ENCODE measurements at regions of chr16 and their contacts with region 1.

Region 1: DNA sequence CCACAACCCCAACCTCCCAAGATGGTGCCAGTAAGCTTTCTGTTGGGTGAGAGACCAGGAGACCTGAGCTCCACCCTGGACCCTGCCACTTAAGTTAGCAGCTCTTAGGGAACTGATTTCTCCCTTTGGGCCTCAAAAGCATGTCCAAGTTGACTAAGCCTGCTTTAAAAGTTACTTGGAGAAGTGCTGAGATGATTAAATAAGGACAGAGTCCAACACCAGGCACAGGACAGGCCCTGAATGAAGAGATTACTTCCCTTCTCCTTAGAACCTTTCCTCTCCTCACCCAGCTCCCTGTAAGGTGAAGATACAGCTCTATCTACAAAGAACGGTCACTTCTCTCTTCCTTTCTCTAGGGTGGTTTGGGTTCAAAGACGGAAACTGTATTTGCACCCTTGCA is 162.6 kb downstream of the XYLT1 start:
- DNase-seq: no peak
- ATAC-seq: no peak
- H3K4me3 ChIP-seq: no peak overlapping the region
- H3K27ac ChIP-seq: no peak overlapping the region
- H3K4me1 ChIP-seq: no peaks in the 10 kb centered on the region
- H3K27me3 ChIP-seq: peaks cover 9% of the 10 kb centered on the region
- CTCF ChIP-seq: no peak

Region 2: DNA sequence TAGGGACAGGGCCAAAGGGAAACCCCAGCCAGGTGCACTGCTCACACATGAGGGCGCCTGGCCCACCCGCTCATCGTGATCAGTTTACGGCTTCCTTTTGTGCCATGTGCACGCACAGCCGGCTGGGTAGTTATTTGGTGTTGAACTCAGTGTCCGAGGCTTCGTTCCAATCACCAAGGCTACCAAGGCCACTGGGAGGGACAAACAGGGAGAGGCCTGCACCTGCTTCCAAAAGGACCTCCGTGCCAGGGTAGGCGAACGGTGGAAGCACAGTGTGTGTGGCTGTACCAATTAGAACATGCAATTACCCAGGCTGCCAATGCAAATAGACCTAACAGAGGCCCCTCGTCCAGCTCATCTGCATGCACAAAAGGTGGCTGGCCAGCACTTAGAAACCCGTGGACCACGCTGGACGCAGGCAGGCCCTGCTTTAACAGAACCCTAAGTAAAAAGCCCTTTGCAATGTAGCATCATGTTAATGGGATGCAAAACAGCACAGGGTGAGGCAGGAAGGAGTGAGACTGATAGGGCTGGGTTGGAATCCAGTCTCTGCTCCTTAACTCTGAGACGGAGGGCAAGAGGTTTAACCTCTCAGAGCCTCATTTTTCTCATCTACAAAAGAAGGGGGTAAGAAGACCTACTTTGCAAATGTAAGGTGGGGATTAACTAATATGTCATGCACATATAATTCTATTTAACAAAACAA is 41.4 kb before region 1 on chr16:
- CTCF ChIA-PET with region 1: no interaction called
- POLR2A ChIA-PET with region 1: no interaction called
- in situ Hi-C with region 1: no loop called
- intact Hi-C with region 1: loop called (anchors 2 kb)
- DNase-seq: no peak
- ATAC-seq: no peak
- H3K4me3 ChIP-seq: no peak overlapping the region
- H3K27ac ChIP-seq: no peak overlapping the region
- H3K4me1 ChIP-seq: no peaks in the 10 kb centered on the region
- H3K27me3 ChIP-seq: no peaks in the 10 kb centered on the region
- CTCF ChIP-seq: no peak

Measured in Panc1 (cell line).